ENCODE measurements at regions of chr4 and their contacts with region 1.

Region 1: DNA sequence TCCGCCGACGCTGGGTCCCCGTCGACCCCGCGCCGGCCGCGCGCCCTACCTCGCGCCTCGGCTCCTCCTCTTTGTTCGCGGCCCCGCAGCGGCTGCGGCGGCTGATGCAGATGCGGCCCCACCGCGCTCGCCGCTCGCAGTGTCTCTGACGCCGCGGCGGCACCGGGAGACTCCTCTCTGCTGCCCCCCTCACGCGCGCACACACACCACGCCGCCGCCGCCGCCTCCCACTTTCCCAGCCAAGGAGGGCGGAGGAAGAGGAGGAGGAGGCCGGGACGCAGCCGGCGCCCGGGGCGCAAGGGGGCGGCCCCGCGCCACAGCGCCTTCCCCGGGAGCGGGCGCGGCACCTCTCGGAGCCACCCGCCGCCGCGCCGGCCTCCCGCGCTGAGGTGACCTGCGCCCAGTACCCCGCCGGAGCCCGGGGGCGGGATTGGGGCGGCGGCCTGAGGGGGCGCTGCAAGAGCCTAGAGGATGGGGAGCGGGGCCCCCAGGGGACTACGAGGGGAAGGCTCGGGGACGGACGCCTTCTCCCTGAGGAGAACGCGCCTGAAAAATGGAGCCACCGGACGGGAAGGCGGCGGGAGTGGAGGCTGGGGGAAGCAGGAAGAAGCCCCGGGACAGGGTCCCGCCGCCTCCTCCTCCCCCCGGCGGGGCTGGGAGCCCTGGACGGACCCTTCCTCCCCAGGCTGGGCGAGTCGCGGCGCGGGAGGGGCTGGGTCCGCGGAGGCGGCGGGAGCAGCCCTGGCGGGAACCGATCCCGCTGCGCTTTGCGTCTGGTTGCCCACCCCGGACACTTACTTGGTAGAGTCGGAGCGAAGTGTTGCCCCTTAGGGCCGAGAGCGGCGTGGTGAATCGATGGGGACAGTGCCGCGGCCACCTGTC is at the start of gene SH3RF1:
- DNase-seq: peak; percentile 91
- ATAC-seq: peak; percentile 95 to 98 (median 96)
- H3K4me3 ChIP-seq: peak within 1 kb of the TSS; percentile 81 to 99 (median 94)
- H3K27ac ChIP-seq: peak within 1 kb of the TSS; percentile 80 to 97 (median 94)
- H3K4me1 ChIP-seq: peaks cover 2 to 54% (median 41%) of the 10 kb centered on the region in 9 donors
- H3K27me3 ChIP-seq: peaks cover 0 to 5% (median 0%) of the 10 kb centered on the region in 7 donors
- CTCF ChIP-seq: peak in 8 of 9 donors; percentile 20 to 59 (median 40)
- total RNA-seq, gene SH3RF1: 7.0 to 11.7 (median 9.9) TPM

Region 2: GRCh38 chr4:169010125-169011023 is 260.7 kb before region 1 on chr4 and contains the start of gene CBR4:
- intact Hi-C with region 1: loop called in 3 of 10 experiments (anchors 5 kb)
- DNase-seq: peak; percentile 97
- ATAC-seq: peak; percentile 98 to 99 (median 99)
- H3K4me3 ChIP-seq: peak within 1 kb of the TSS; percentile 63 to 84 (median 68)
- H3K27ac ChIP-seq: peak within 1 kb of the TSS; percentile 74 to 98 (median 94)
- H3K4me1 ChIP-seq: peaks cover 4 to 51% (median 38%) of the 10 kb centered on the region in 9 donors
- H3K27me3 ChIP-seq: no peaks in the 10 kb centered on the region
- CTCF ChIP-seq: peak in 8 of 9 donors; percentile 11 to 46 (median 37)
- total RNA-seq, gene CBR4: 14.0 to 25.3 (median 22.4) TPM

Region 3: GRCh38 chr4:169045862-169046584 is 225.0 kb before region 1 on chr4:
- intact Hi-C with region 1: loop called in 1 of 10 experiments (anchors 10 kb)
- DNase-seq: no peak
- ATAC-seq: peak in 4 of 8 donors; percentile 25 to 55 (median 36)
- H3K4me3 ChIP-seq: no peak overlapping the region
- H3K27ac ChIP-seq: no peak overlapping the region
- H3K4me1 ChIP-seq: peaks cover under 1 to 28% (median 25%) of the 10 kb centered on the region in 9 donors
- H3K27me3 ChIP-seq: no peaks in the 10 kb centered on the region
- CTCF ChIP-seq: peak in 5 of 9 donors; percentile 18 to 43 (median 40)

Region 4: GRCh38 chr4:169133932-169134331 is 137.1 kb before region 1 on chr4:
- intact Hi-C with region 1: loop called in 3 of 10 experiments (anchors 5 to 10 kb)
- DNase-seq: no peak
- ATAC-seq: peak in 7 of 8 donors; percentile 35 to 85 (median 67)
- H3K4me3 ChIP-seq: no peak overlapping the region
- H3K27ac ChIP-seq: peak overlapping the region in 9 of 10 donors; percentile 16 to 51 (median 24)
- H3K4me1 ChIP-seq: peaks cover 5 to 50% (median 24%) of the 10 kb centered on the region in 9 donors
- H3K27me3 ChIP-seq: no peaks in the 10 kb centered on the region
- CTCF ChIP-seq: no peak

Region 5: GRCh38 chr4:169485791-169486742 is 215.0 kb after region 1 on chr4:
- intact Hi-C with region 1: loop called in 6 of 10 experiments (anchors 5 to 10 kb)
- DNase-seq: peak in 1 of 2 donors; percentile 23
- ATAC-seq: peak in 4 of 8 donors; percentile 59 to 65 (median 62)
- H3K4me3 ChIP-seq: peak overlapping the region in 1 of 10 donors; percentile 20
- H3K27ac ChIP-seq: no peak overlapping the region
- H3K4me1 ChIP-seq: peaks cover 0 to 5% (median 0%) of the 10 kb centered on the region in 9 donors
- H3K27me3 ChIP-seq: no peaks in the 10 kb centered on the region
- CTCF ChIP-seq: peak in 8 of 9 donors; percentile 35 to 75 (median 65)

Region 6: GRCh38 chr4:169968999-169969398 is 697.9 kb after region 1 on chr4:
- intact Hi-C with region 1: no loop called
- DNase-seq: no peak
- ATAC-seq: no peak
- H3K4me3 ChIP-seq: no peak overlapping the region
- H3K27ac ChIP-seq: no peak overlapping the region
- H3K4me1 ChIP-seq: peaks cover 0 to 6% (median under 1%) of the 10 kb centered on the region in 9 donors
- H3K27me3 ChIP-seq: peaks cover 0 to 10% (median 0%) of the 10 kb centered on the region in 7 donors
- CTCF ChIP-seq: no peak

Measured in heart right ventricle (tissue), 16 donors.